AG04450 (cell line): ENCODE measurements at regions of chr7 and their contacts with region 1.

Region 1: DNA sequence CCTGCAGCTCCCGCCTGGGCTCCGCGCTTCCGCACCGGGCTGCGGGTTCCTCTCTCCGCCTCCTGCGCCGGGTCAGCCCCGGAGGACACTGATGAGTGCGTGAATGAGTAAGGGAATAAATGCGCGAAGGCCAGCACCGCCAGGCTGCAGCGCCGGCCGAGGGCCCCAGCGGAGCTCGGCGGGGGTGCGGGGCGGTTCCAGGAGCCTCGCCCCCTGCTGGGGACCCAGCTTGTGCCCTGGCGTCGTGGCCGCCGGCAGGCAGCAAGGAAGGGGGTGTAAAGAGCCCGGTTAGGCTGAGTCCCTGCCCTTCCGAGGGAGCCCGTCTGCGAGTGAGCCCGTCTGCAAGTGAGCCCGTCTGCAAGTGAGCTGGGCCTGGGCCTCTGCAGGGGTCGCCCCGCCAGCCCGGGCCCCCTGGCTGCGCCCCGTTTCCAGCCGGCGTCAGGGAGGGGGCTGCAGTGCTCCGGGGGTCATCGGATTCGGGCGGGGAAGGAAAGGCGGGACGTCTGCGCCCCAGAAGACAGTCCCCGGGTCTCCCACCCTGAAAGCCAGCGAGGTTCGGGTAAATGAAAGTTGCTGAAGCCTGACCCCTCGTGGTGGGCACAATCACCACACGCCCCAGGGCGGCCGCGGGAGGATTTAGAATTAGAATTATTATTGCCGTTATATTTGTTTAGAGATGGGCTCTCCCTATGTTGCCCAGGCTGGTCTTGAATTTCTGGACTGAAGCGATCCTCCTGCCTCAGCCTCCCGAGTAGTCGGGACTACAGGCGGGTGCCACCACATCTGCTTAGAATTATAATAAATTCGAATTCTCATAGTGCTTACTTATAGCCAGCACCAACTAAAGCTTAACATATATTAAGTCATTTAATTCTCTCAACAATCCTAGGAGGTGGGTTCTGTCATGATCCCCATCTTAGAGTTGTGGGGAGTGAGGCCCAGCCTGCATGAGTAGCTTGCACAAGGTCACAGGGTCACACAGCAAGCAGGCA is 8.6 kb upstream of the CRYGN start:
- DNase-seq: no peak
- H3K4me3 ChIP-seq: peak overlapping the region; percentile 51
- H3K27ac ChIP-seq: no peak overlapping the region
- H3K27me3 ChIP-seq: peaks cover 4% of the 10 kb centered on the region
- CTCF ChIP-seq: peak; percentile 77

Region 2: DNA sequence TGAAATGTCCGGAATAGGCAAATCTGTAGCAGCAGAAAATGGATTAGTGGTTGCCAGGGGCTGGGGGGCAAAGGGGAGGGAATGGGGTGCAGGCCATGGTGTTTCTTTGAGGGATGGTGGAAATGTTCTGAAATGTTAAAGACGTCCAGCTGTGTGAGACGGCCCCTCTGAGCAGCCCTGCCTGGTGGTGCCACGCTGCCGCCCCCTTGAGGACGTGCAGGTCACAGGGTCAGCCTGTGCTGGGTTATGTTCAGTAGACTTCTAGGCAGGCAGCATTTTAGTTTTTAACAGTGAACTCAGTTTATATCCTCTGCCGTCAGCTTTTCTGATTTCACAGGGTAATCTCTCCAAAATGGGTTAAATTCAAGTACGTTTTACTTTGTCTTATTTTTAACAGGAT is 97.5 kb before region 1 on chr7:
- CTCF ChIA-PET with region 1: interaction called, 27 read pairs
- POLR2A ChIA-PET with region 1: no interaction called
- DNase-seq: no peak
- H3K4me3 ChIP-seq: no peak overlapping the region
- H3K27ac ChIP-seq: no peak overlapping the region
- H3K27me3 ChIP-seq: no peaks in the 10 kb centered on the region
- CTCF ChIP-seq: no peak; the same call in 1 of the 2 replicates

Region 3: GRCh38 chr7:151368136-151368571 is 80.4 kb before region 1 on chr7:
- CTCF ChIA-PET with region 1: interaction called, 109 read pairs
- POLR2A ChIA-PET with region 1: interaction called, 17 read pairs
- DNase-seq: peak; percentile 39
- H3K4me3 ChIP-seq: no peak overlapping the region
- H3K27ac ChIP-seq: no peak overlapping the region
- H3K27me3 ChIP-seq: no peaks in the 10 kb centered on the region
- CTCF ChIP-seq: peak; percentile 97

Region 4: GRCh38 chr7:151470711-151471110 is 22.2 kb after region 1 on chr7:
- CTCF ChIA-PET with region 1: interaction called, 10 read pairs
- POLR2A ChIA-PET with region 1: no interaction called
- DNase-seq: no peak
- H3K4me3 ChIP-seq: no peak overlapping the region
- H3K27ac ChIP-seq: no peak overlapping the region
- H3K27me3 ChIP-seq: no peaks in the 10 kb centered on the region
- CTCF ChIP-seq: no peak

Region 5: DNA sequence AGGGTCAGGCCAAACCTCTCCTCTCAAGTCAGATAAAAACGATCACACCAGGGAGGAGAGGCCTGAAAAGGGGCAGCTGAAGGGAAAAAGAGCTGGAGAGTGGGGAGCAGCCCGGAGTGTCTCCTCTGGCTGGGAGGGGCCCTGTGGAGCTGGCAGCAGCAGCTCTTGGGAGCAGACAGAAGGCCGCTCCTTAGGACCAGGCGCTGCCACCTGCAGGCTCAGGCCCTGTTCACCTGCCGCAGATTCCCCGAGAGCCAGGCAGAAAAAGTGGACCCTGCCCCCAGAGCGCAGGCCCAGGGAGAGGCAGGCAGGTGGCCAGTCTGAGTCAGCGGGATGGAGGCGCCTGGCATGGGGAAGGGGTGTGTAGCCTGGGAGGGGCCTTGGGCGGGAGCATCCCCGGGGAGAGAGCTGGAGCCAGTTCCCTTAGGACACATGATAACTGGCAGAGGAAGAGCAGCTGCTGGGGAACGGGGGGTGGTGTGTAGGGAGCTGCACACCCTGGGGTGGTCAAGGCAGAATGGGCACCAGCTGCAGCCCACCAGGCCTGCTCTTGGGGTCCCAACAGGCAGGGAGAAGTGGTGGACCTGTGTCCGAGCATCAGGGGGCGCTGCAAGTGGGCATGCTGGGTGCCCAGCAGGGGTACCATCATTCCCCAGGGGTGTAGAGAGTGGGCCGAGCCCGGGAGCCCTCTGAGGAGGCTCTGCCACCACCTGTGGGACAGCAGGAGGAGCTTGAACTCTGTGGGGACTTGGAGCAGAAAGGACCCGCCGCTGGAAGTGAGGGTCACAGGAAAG is 248.4 kb after region 1 on chr7:
- CTCF ChIA-PET with region 1: no interaction called
- POLR2A ChIA-PET with region 1: no interaction called
- DNase-seq: no peak
- H3K4me3 ChIP-seq: no peak overlapping the region
- H3K27ac ChIP-seq: no peak overlapping the region
- H3K27me3 ChIP-seq: no peaks in the 10 kb centered on the region
- CTCF ChIP-seq: no peak

Region 6: DNA sequence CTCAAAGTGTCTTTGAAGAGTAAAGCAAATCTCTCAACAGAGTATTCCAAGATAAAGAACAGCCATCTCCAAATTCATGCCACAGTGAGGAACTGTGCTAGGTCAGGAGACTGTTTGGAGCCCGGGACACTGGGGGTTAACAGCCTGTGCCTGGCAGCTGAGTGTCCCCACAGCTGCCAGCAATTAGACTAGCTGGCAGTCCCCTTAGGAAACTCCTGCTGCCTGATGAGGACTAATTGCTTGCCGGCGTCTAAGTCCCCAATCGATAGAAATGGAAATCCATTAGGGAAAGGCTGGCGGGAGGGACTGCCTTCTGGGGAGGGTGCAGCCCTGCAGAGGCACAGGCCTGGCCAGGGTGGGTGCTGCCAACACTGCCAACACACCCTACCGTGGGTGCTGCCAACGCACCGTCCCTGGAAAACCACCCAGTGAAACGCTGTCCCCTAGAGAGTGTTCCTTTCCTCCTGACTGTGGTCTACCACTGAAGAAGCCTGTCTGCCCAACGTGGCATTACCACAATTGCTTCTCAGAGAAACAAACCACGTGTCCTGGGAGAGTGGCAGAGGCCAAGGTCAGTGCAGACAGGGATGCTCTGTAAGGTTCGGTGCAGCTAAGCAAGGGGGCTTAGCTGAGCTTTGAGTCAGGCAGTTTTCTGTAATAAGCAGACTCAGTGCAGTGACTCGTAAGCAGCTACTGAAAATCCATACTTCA is 1166.6 kb after region 1 on chr7:
- CTCF ChIA-PET with region 1: no interaction called
- POLR2A ChIA-PET with region 1: no interaction called
- DNase-seq: no peak
- H3K4me3 ChIP-seq: no peak overlapping the region
- H3K27ac ChIP-seq: no peak overlapping the region
- H3K27me3 ChIP-seq: peaks cover 4% of the 10 kb centered on the region
- CTCF ChIP-seq: no peak